ENCODE measurements at regions of chr5 and their contacts with region 1.

Region 1: GRCh38 chr5:34007621-34008600 is at the start of gene AMACR:
- DNase-seq: peak; percentile 96 to 97
- ATAC-seq: peak; percentile 95
- H3K4me3 ChIP-seq: peak within 1 kb of the TSS; percentile 62 to 88
- H3K27ac ChIP-seq: peak within 1 kb of the TSS; percentile 67 to 84
- H3K4me1 ChIP-seq: peaks cover 0 to 4% of the 10 kb centered on the region in 2 donors
- H3K27me3 ChIP-seq: no peaks in the 10 kb centered on the region
- total RNA-seq, gene AMACR: 5.0 to 11.4 TPM

Region 2: DNA sequence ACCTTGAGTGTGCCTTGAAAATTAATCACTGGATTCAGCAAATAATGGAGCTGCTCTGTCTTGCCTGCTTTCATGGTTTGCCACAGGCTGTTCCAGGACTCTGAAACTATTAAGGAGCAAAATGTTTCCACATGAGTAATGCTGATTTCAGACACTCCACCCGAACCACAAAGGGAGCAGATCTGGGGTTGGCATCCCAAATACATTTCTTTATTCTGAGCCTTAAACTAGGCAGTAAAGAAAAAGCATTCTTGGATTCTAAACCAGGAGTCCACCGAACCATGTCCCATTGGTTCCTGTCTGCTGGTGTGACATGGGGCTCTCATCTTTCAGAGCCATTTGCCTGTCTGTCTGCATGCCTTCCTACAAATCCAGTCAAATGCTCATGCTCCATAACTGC is 45.2 kb after region 1 on chr5:
- intact Hi-C with region 1: loop called in 1 of 2 experiments (anchors 5 kb)
- DNase-seq: no peak
- ATAC-seq: peak; percentile 72
- H3K4me3 ChIP-seq: no peak overlapping the region
- H3K27ac ChIP-seq: peak overlapping the region in 1 of 2 donors; percentile 15
- H3K4me1 ChIP-seq: no peaks in the 10 kb centered on the region
- H3K27me3 ChIP-seq: no peaks in the 10 kb centered on the region

Region 3: DNA sequence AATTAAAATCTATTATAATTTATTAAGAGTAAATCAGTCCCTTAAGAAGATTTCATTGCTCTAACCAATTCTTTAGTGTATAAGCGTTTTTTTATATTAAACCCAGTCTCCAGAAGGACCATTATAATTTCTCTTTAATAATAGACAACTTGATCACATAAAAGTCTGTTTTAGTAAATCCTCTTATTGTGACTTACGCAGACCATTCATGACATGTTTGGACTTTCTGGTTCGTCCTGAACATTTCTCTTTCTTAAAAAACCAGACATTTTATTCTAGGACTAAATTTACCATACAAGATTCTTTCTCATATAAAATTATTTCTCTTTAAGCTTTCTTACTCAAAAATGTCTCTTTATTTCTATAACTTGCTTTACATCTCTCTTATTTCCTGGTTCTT is 452.0 kb after region 1 on chr5:
- intact Hi-C with region 1: loop called in 1 of 2 experiments (anchors 10 kb)
- DNase-seq: no peak
- ATAC-seq: no peak
- H3K4me3 ChIP-seq: no peak overlapping the region
- H3K27ac ChIP-seq: no peak overlapping the region
- H3K4me1 ChIP-seq: no peaks in the 10 kb centered on the region
- H3K27me3 ChIP-seq: no peaks in the 10 kb centered on the region

Region 4: GRCh38 chr5:34474573-34475021 is 466.7 kb after region 1 on chr5:
- intact Hi-C with region 1: loop called (anchors 10 kb)
- DNase-seq: no peak
- ATAC-seq: peak; percentile 87
- H3K4me3 ChIP-seq: no peak overlapping the region
- H3K27ac ChIP-seq: no peak overlapping the region
- H3K4me1 ChIP-seq: no peaks in the 10 kb centered on the region
- H3K27me3 ChIP-seq: no peaks in the 10 kb centered on the region

Measured in aorta (tissue), 5 donors.